ENCODE measurements at regions of chr11 and their contacts with region 1.

Region 1: DNA sequence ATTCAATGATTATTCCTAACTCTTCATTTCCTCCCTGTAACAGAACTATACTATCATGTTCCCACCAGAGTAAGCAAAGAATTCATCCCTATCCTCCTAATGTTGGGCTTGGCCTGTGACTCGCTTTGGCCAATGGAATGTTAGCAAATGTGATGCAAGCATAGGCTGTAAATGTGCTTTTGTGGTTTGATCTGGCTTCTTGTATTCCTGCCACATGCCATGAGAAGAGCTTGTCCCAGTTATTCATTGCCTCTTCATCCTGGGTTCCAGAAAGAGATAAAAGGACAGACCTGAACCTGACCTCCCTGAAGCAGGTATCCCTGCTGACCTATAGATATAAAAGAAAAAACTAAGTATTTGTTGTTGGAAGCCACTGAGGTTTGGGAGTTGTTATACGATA is 51.0 kb downstream of the SYTL2 start:
- DNase-seq: no peak
- ATAC-seq: no peak
- H3K4me3 ChIP-seq: no peak overlapping the region
- H3K4me3 Mint-ChIP-seq: no peak overlapping the region
- H3K27ac ChIP-seq: no peak overlapping the region
- H3K27ac Mint-ChIP-seq: peak overlapping the region; percentile 64 to 68
- H3K4me1 ChIP-seq: peaks cover 37 to 47% of the 10 kb centered on the region in 2 experiments
- H3K4me1 Mint-ChIP-seq: peaks cover 73 to 84% (median 74%) of the 10 kb centered on the region in 3 donors
- H3K27me3 ChIP-seq: no peaks in the 10 kb centered on the region
- H3K27me3 Mint-ChIP-seq: no peaks in the 10 kb centered on the region

Region 2: GRCh38 chr11:85732965-85733364 is 26.9 kb before region 1 on chr11:
- CTCF ChIA-PET with region 1: no interaction called
- POLR2A ChIA-PET with region 1: no interaction called
- DNase-seq: no peak
- ATAC-seq: no peak
- H3K4me3 ChIP-seq: no peak overlapping the region
- H3K4me3 Mint-ChIP-seq: no peak overlapping the region
- H3K27ac ChIP-seq: no peak overlapping the region
- H3K27ac Mint-ChIP-seq: no peak overlapping the region
- H3K4me1 ChIP-seq: peaks cover 9 to 16% of the 10 kb centered on the region in 2 experiments
- H3K4me1 Mint-ChIP-seq: peaks cover 23 to 36% (median 31%) of the 10 kb centered on the region in 3 donors
- H3K27me3 ChIP-seq: no peaks in the 10 kb centered on the region
- H3K27me3 Mint-ChIP-seq: no peaks in the 10 kb centered on the region

Region 3: GRCh38 chr11:85774256-85775101 is 14.6 kb after region 1 on chr11:
- CTCF ChIA-PET with region 1: no interaction called
- POLR2A ChIA-PET with region 1: no interaction called
- DNase-seq: no peak
- ATAC-seq: peak in 2 of 4 experiments; percentile 47 to 61
- H3K4me3 ChIP-seq: no peak overlapping the region
- H3K4me3 Mint-ChIP-seq: peak overlapping the region in 2 of 3 donors; percentile 9 to 19
- H3K27ac ChIP-seq: peak overlapping the region; percentile 3
- H3K27ac Mint-ChIP-seq: peak overlapping the region; percentile 69 to 81
- H3K4me1 ChIP-seq: peaks cover 0 to 6% of the 10 kb centered on the region in 2 experiments
- H3K4me1 Mint-ChIP-seq: peaks cover 37 to 49% (median 38%) of the 10 kb centered on the region in 3 donors
- H3K27me3 ChIP-seq: no peaks in the 10 kb centered on the region
- H3K27me3 Mint-ChIP-seq: no peaks in the 10 kb centered on the region

Region 4: GRCh38 chr11:85821636-85822035 is 61.7 kb after region 1 on chr11:
- CTCF ChIA-PET with region 1: no interaction called
- POLR2A ChIA-PET with region 1: interaction called in 1 of 2 experiments, 10 read pairs
- DNase-seq: no peak
- ATAC-seq: no peak
- H3K4me3 ChIP-seq: no peak overlapping the region
- H3K4me3 Mint-ChIP-seq: no peak overlapping the region
- H3K27ac ChIP-seq: no peak overlapping the region
- H3K27ac Mint-ChIP-seq: peak overlapping the region in 1 of 2 donors; percentile 71
- H3K4me1 ChIP-seq: peaks cover 36 to 42% of the 10 kb centered on the region in 2 experiments
- H3K4me1 Mint-ChIP-seq: peaks cover 53 to 58% (median 54%) of the 10 kb centered on the region in 3 donors
- H3K27me3 ChIP-seq: no peaks in the 10 kb centered on the region
- H3K27me3 Mint-ChIP-seq: no peaks in the 10 kb centered on the region

Region 5: GRCh38 chr11:86537541-86538222 is 777.8 kb after region 1 on chr11:
- CTCF ChIA-PET with region 1: no interaction called
- POLR2A ChIA-PET with region 1: no interaction called
- DNase-seq: no peak
- ATAC-seq: no peak
- H3K4me3 ChIP-seq: no peak overlapping the region
- H3K4me3 Mint-ChIP-seq: no peak overlapping the region
- H3K27ac ChIP-seq: no peak overlapping the region
- H3K27ac Mint-ChIP-seq: no peak overlapping the region
- H3K4me1 ChIP-seq: peaks cover 0 to 11% of the 10 kb centered on the region in 2 experiments
- H3K4me1 Mint-ChIP-seq: no peaks in the 10 kb centered on the region
- H3K27me3 ChIP-seq: no peaks in the 10 kb centered on the region
- H3K27me3 Mint-ChIP-seq: no peaks in the 10 kb centered on the region